ENCODE measurements at regions of chr16 and their contacts with region 1.

Region 1: GRCh38 chr16:68264128-68265077 is at the start of gene SLC7A6:
- DNase-seq: peak; percentile 92
- ATAC-seq: peak; percentile 69
- H3K4me3 Mint-ChIP-seq: peak within 1 kb of the TSS; percentile 91
- H3K27ac Mint-ChIP-seq: peak within 1 kb of the TSS; percentile 97
- H3K4me1 Mint-ChIP-seq: peaks cover 43% of the 10 kb centered on the region
- H3K27me3 Mint-ChIP-seq: no peaks in the 10 kb centered on the region
- total RNA-seq, gene SLC7A6: 55.7 to 58.7 TPM

Region 2: DNA sequence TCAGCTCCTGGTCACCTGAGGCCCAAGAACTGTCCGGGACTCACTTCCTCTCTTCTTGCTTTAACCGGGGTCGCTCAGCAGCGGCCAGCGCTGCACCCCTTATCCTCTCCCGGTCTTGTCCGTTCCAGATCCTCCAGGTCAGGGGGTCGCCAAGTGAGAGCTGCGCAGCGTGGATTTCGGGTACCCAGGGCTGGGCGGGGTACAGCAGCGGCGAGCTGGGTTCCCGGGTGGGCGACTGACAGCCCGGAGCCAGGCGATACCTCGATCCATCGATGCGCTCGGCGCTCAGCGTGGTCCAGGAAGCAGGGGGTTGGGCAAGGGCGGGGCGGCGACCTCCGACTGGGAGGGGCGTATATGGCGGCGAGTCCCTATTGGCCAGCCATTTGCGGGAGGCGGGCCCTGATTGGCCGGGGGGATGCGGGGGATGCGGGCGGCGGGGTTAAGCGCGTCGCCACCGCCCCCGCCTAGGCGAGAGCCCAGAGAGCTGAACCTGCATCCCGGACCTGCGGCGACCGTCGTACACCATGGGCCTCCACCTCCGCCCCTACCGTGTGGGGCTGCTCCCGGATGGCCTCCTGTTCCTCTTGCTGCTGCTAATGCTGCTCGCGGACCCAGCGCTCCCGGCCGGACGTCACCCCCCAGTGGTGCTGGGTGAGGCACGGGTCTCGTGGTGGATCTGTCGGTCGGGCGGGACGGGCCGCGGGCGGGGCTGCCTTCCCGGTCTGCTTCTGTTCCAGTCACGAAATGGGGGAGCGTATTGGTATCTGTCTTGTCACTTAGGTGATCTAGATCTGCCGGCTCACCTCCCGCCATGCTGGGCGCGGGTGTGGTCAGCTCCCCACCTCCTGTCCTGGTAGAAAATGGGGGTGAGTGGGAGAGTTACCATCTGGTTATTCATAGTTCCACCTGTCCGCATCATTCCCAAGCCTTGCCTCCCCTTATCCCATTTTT is 19.2 kb before region 1 on chr16 and contains the start of gene PLA2G15:
- CTCF ChIA-PET with region 1: interaction called, 23 read pairs
- POLR2A ChIA-PET with region 1: no interaction called
- intact Hi-C with region 1: loop called (anchors 1 to 2 kb)
- DNase-seq: peak; percentile 98
- ATAC-seq: peak; percentile 98
- H3K4me3 Mint-ChIP-seq: peak within 1 kb of the TSS; percentile 88
- H3K27ac Mint-ChIP-seq: peak within 1 kb of the TSS; percentile 83
- H3K4me1 Mint-ChIP-seq: peaks cover 15% of the 10 kb centered on the region
- H3K27me3 Mint-ChIP-seq: no peaks in the 10 kb centered on the region
- total RNA-seq, gene PLA2G15: 6.0 to 7.0 TPM

Region 3: DNA sequence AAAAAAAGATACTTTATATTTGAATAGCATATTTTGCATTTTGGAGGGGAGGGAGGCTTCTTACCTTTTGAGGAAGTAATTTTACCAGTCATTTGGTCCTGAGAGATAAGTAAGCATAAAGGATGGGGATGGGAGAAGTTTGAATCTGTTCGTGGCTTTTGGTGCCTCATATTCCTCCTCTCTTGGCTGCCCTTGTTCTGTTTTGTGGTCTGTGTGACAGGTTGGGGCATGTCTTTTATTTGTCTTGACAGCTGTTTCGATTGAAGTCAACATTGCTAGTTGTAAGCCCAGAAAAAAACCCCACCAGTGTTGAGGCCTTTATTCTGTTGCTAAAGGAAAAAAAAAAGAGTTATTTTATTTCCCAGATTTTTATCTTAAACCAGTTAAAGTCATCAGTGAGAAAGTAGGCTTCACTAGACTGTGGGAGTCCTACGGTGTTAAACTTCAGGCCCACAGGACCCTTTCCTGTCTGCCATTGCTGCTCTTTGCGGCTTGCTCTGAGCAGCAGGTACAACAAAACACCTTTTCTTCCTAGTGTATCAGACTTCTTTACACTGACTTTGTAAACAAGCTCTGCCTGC is 11.3 kb after region 1 on chr16:
- CTCF ChIA-PET with region 1: interaction called, 44 read pairs
- POLR2A ChIA-PET with region 1: no interaction called
- intact Hi-C with region 1: loop called in 1 of 2 experiments (anchors 1 kb)
- DNase-seq: peak; percentile 62
- ATAC-seq: peak; percentile 75
- H3K4me3 Mint-ChIP-seq: peak overlapping the region; percentile 48
- H3K27ac Mint-ChIP-seq: peak overlapping the region; percentile 97
- H3K4me1 Mint-ChIP-seq: peaks cover 76% of the 10 kb centered on the region
- H3K27me3 Mint-ChIP-seq: no peaks in the 10 kb centered on the region

Region 4: DNA sequence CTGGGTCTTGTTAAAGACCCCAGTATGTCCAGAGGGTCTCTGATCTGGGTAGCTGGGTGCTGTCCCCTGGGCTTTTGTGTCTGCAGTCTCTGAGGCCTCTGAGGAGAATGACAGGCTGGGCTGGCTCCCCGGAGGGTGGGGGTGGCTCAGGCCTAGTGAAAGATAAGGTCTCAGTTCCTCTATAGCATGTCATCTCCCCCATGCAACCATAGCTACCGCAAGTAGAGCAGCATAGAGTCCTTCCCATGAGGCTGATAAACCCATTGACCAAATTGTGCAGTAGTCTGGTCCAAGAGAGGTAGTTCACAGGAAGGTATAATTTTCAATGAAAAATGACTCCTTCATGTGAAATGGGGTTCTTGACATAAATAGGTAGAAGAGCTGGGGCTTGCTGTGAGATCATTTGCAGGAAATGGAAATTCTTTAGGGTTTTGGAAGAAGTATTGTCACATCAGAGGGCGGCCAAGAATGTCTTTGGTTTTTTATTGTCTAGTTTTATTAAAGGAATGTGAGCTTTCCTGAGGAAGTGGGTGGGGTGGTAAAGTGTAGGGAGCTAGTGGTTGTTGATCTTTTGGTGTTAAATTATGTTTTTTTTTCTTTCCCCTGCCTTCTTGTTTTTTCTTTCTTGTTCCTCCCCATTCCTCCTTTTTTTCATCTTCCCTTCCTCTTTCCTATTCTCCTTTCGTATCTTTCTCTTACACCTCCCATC is 25.4 kb after region 1 on chr16:
- CTCF ChIA-PET with region 1: interaction called, 67 read pairs
- POLR2A ChIA-PET with region 1: interaction called, 14 read pairs
- intact Hi-C with region 1: loop called (anchors 1 to 2 kb)
- DNase-seq: peak; percentile 79
- ATAC-seq: peak; percentile 77
- H3K4me3 Mint-ChIP-seq: peak overlapping the region; percentile 0
- H3K27ac Mint-ChIP-seq: peak overlapping the region; percentile 96
- H3K4me1 Mint-ChIP-seq: peaks cover 83% of the 10 kb centered on the region
- H3K27me3 Mint-ChIP-seq: no peaks in the 10 kb centered on the region

Region 5: DNA sequence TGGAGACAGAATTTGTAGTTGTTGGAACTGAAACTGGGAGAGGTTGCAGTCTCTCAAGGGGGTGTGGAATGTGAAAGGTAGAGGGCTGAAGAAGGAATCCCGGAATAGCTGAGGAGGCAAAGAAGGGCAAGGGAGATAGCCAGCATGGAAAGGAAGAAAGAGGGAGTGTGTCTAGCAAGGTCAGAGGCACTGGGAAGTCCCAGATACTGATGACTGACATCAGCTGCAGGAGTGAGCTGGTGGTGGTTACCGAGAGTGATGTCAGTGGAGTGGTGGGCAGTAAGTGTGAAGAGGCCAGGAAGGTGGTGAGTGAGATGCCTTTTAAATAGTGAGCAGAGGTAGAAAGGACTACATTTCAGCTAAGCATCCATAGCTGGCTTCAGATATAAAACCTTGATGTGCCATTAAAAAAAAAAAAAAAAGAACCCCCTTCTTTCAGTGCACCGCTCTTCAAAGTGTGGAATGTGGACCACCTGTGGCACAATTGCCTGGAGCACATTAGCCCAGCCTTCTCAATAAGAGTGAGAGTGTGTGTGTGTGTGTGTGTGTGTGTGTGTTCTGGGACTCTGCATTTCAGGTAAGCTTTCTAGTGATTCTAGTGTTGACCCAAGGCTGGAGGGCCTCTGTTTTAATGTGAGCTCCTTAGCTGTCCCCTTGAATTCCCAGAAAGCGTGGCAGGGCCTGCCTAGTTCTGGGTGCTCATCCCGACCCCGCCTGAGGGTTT is 54.9 kb after region 1 on chr16:
- CTCF ChIA-PET with region 1: interaction called, 517 read pairs
- POLR2A ChIA-PET with region 1: interaction called, 6 read pairs
- intact Hi-C with region 1: loop called in 1 of 2 experiments (anchors 2 kb)
- DNase-seq: peak; percentile 81
- ATAC-seq: peak; percentile 100
- H3K4me3 Mint-ChIP-seq: no peak overlapping the region
- H3K27ac Mint-ChIP-seq: peak overlapping the region; percentile 74
- H3K4me1 Mint-ChIP-seq: peaks cover 27% of the 10 kb centered on the region
- H3K27me3 Mint-ChIP-seq: no peaks in the 10 kb centered on the region

Region 6: DNA sequence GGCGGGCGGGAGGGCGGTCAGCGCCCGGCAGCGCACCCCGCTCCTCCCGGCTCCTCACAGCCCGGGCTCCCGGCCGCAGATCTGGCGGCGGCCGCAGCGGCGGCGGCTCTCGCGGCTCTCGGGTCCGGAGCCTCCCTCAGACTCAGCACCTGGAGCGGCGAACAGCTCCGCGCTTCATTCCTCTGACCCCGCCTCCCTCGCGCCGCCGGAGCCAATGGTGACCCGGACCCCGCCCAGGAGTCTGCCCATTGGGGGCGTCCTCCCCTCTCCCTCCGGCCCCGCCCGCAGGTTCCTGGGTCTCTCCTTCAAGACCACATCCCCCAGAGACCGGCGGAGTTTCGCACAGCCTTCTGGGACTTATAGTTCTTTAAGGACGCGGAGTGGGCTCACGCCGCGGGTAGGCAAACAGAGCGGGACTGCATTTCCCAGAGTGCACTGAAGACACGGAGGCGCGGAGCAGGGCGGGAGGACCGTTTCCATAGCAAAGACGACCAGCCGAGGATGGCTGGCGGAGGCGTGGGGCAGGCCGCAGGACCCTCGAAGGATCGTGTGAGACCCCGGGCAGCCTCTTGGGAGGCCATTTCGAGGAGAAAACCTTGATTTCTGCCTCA is 184.1 kb after region 1 on chr16 and contains the start of gene SMPD3:
- CTCF ChIA-PET with region 1: no interaction called
- POLR2A ChIA-PET with region 1: no interaction called
- intact Hi-C with region 1: loop called in 1 of 2 experiments (anchors 5 kb)
- DNase-seq: peak; percentile 99
- ATAC-seq: peak; percentile 98
- H3K4me3 Mint-ChIP-seq: peak within 1 kb of the TSS; percentile 71
- H3K27ac Mint-ChIP-seq: no peak within 1 kb of the TSS
- H3K4me1 Mint-ChIP-seq: peaks cover 14% of the 10 kb centered on the region
- H3K27me3 Mint-ChIP-seq: peaks cover 19% of the 10 kb centered on the region
- total RNA-seq, gene SMPD3: 0.07 to 0.37 TPM

Region 7: DNA sequence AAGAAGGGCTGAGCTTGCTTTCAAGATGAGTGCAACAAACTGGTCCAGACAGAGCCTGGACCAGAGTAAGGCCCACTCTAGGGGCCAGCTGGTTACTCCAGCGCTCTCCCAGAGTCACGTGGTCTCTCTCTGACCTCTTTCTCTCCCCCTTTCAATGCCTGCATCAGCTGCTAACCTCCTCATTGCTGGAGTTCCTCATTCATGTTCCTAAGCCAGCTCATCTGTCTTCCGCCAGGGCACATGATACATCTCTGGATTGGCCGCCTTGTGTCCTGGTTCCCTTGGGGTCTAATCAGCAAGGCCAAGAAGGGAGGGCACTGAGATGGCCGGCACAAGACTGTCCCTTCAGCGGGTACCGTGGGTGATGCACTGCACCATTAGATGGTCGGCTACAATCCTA is 247.8 kb after region 1 on chr16:
- CTCF ChIA-PET with region 1: interaction called, 4 read pairs
- POLR2A ChIA-PET with region 1: no interaction called
- intact Hi-C with region 1: loop called (anchors 1 to 10 kb)
- DNase-seq: no peak
- ATAC-seq: no peak
- H3K4me3 Mint-ChIP-seq: no peak overlapping the region
- H3K27ac Mint-ChIP-seq: no peak overlapping the region
- H3K4me1 Mint-ChIP-seq: no peaks in the 10 kb centered on the region
- H3K27me3 Mint-ChIP-seq: no peaks in the 10 kb centered on the region